CD4-positive, alpha-beta T cell (primary cell): ENCODE measurements at regions of chr16 and their contacts with region 1.

Region 1: DNA sequence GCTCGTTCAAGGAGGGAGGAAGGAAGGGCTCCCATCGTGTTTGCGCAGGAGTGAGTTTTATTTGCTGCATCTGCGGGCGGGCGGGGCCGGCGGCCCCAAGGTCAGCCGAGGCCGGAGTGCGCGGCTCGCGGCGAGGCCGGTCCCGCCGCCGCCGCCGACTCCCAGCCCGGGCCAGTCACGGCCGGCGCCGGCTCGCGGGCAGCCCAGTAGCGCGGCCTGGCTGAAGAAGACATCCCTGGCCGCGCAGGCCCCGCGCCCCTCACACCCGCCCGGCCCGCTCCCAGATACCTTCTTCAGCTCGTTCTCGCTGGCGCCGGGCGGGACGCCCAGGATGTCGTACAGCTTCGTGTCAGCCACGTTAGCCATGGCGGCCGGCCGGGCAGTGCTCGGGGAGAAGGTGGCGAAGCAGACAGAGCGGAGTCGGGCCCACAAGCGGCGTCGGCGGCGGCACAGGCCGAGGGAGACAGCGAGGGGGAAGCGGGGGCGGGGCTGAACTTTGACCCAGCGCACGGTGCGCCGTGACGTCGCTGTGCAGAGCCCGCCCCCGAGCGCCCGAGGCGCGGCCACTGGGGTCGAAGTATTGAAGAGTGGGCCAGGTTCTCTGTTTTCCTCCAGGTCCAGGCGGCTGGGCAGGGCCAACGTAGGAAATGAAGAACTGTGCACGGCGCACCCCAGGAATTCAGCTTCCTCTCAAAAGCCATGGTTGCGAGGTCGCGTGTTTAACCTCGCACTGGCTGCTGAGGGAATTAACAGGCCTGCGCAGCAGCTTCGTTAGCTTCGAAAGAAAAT is at the start of gene DNAJA2:
- DNase-seq: peak; percentile 86 to 97 (median 90)
- ATAC-seq: peak; percentile 90
- H3K4me3 ChIP-seq: peak within 1 kb of the TSS; percentile 86
- H3K4me3 Mint-ChIP-seq: peak within 1 kb of the TSS; percentile 93
- H3K27ac ChIP-seq: peak within 1 kb of the TSS; percentile 93 to 94
- H3K27ac Mint-ChIP-seq: peak within 1 kb of the TSS; percentile 91
- H3K4me1 ChIP-seq: peaks cover 48% of the 10 kb centered on the region
- H3K4me1 Mint-ChIP-seq: peaks cover 61% of the 10 kb centered on the region
- H3K27me3 ChIP-seq: no peaks in the 10 kb centered on the region
- H3K27me3 Mint-ChIP-seq: no peaks in the 10 kb centered on the region
- CTCF ChIP-seq: no peak
- total RNA-seq, gene DNAJA2: 80.8 to 81.4 TPM

Region 2: GRCh38 chr16:46789499-46790414 is 183.6 kb before region 1 on chr16:
- CTCF ChIA-PET with region 1: no interaction called
- POLR2A ChIA-PET with region 1: interaction called, 7 read pairs
- intact Hi-C with region 1: loop called in 1 of 2 experiments (anchors 10 kb)
- DNase-seq: peak; percentile 66 to 88 (median 77)
- ATAC-seq: peak; percentile 97
- H3K4me3 ChIP-seq: peak overlapping the region; percentile 68
- H3K4me3 Mint-ChIP-seq: peak overlapping the region; percentile 79
- H3K27ac ChIP-seq: peak overlapping the region in 1 of 2 donors; percentile 48
- H3K27ac Mint-ChIP-seq: peak overlapping the region; percentile 30
- H3K4me1 ChIP-seq: peaks cover 11% of the 10 kb centered on the region
- H3K4me1 Mint-ChIP-seq: peaks cover 19% of the 10 kb centered on the region
- H3K27me3 ChIP-seq: no peaks in the 10 kb centered on the region
- H3K27me3 Mint-ChIP-seq: no peaks in the 10 kb centered on the region
- CTCF ChIP-seq: no peak

Region 3: GRCh38 chr16:46883690-46884512 is 89.5 kb before region 1 on chr16 and contains the start of gene GPT2:
- CTCF ChIA-PET with region 1: no interaction called
- POLR2A ChIA-PET with region 1: interaction called, 22 read pairs
- intact Hi-C with region 1: no loop called
- DNase-seq: peak; percentile 35 to 81 (median 55)
- ATAC-seq: peak; percentile 91
- H3K4me3 ChIP-seq: peak within 1 kb of the TSS; percentile 58
- H3K4me3 Mint-ChIP-seq: peak within 1 kb of the TSS; percentile 88
- H3K27ac ChIP-seq: no peak within 1 kb of the TSS
- H3K27ac Mint-ChIP-seq: no peak within 1 kb of the TSS
- H3K4me1 ChIP-seq: peaks cover 12% of the 10 kb centered on the region
- H3K4me1 Mint-ChIP-seq: peaks cover 17% of the 10 kb centered on the region
- H3K27me3 ChIP-seq: peaks cover 0 to 6% of the 10 kb centered on the region in 2 experiments
- H3K27me3 Mint-ChIP-seq: peaks cover 13% of the 10 kb centered on the region
- CTCF ChIP-seq: no peak
- total RNA-seq, gene GPT2: 0.47 TPM in 1 of 2 experiments, not detected in the other

Region 4: DNA sequence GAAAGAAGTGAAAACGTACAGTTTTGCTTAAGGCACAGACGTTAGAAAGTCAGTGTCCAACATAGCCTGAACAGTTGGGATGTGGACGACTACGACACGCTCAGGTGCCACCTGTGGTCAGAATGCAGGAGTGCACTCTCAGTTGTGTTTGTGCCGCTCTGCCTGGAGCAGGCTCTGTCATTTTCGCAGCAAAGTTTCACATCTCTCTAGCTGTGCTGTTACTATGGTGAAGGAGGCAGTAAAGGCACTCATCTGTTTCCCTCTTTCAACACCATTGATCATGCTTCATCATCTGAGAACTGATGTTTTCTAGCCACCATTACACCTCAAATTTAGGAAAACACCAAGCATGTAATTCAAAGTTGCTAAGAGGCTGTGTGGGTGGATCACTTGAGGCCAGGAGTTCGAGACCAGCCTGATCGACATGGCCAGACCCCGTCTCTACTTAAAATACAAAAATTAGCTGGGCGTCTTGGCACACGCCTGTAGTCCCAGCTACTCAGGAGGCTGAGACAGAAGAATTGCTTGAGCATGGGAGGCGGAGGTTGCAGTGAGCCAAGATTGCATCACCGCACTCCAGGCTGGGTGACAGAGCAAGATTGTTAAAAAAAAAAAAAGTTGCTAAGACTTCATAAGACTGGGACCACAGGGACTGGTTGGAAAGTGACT is 45.0 kb after region 1 on chr16:
- CTCF ChIA-PET with region 1: no interaction called
- POLR2A ChIA-PET with region 1: interaction called, 3 read pairs
- intact Hi-C with region 1: loop called in 1 of 2 experiments (anchors 5 kb)
- DNase-seq: peak in 12 of 14 experiments; percentile 10 to 73 (median 24)
- ATAC-seq: peak; percentile 85
- H3K4me3 ChIP-seq: no peak overlapping the region
- H3K4me3 Mint-ChIP-seq: no peak overlapping the region
- H3K27ac ChIP-seq: no peak overlapping the region
- H3K27ac Mint-ChIP-seq: no peak overlapping the region
- H3K4me1 ChIP-seq: peaks cover 18% of the 10 kb centered on the region
- H3K4me1 Mint-ChIP-seq: peaks cover 18% of the 10 kb centered on the region
- H3K27me3 ChIP-seq: no peaks in the 10 kb centered on the region
- H3K27me3 Mint-ChIP-seq: no peaks in the 10 kb centered on the region
- CTCF ChIP-seq: no peak

Region 5: GRCh38 chr16:47141773-47142485 is 168.5 kb after region 1 on chr16:
- CTCF ChIA-PET with region 1: interaction called, 7 read pairs
- POLR2A ChIA-PET with region 1: interaction called, 23 read pairs
- intact Hi-C with region 1: loop called (anchors 2 to 10 kb)
- DNase-seq: peak; percentile 63 to 91 (median 77)
- ATAC-seq: peak; percentile 82
- H3K4me3 ChIP-seq: peak overlapping the region; percentile 56
- H3K4me3 Mint-ChIP-seq: peak overlapping the region; percentile 87
- H3K27ac ChIP-seq: no peak overlapping the region
- H3K27ac Mint-ChIP-seq: peak overlapping the region; percentile 45
- H3K4me1 ChIP-seq: peaks cover 17% of the 10 kb centered on the region
- H3K4me1 Mint-ChIP-seq: peaks cover 17% of the 10 kb centered on the region
- H3K27me3 ChIP-seq: peaks cover 0 to 8% of the 10 kb centered on the region in 2 experiments
- H3K27me3 Mint-ChIP-seq: peaks cover 21% of the 10 kb centered on the region
- CTCF ChIP-seq: peak; percentile 83

Region 6: GRCh38 chr16:48244080-48244862 is 1270.9 kb after region 1 on chr16 and contains the start of gene LONP2:
- CTCF ChIA-PET with region 1: no interaction called
- POLR2A ChIA-PET with region 1: interaction called, 6 read pairs
- intact Hi-C with region 1: loop called in 1 of 2 experiments (anchors 5 kb)
- DNase-seq: peak; percentile 81 to 94 (median 87)
- ATAC-seq: peak; percentile 95
- H3K4me3 ChIP-seq: peak within 1 kb of the TSS; percentile 86
- H3K4me3 Mint-ChIP-seq: peak within 1 kb of the TSS; percentile 90
- H3K27ac ChIP-seq: peak within 1 kb of the TSS; percentile 78
- H3K27ac Mint-ChIP-seq: peak within 1 kb of the TSS; percentile 89
- H3K4me1 ChIP-seq: peaks cover 43% of the 10 kb centered on the region
- H3K4me1 Mint-ChIP-seq: peaks cover 49% of the 10 kb centered on the region
- H3K27me3 ChIP-seq: no peaks in the 10 kb centered on the region
- H3K27me3 Mint-ChIP-seq: no peaks in the 10 kb centered on the region
- CTCF ChIP-seq: no peak
- total RNA-seq, gene LONP2: 77.2 to 81.0 TPM

Region 7: GRCh38 chr16:48609652-48610029 is 1636.2 kb after region 1 on chr16:
- CTCF ChIA-PET with region 1: no interaction called
- POLR2A ChIA-PET with region 1: interaction called, 20 read pairs
- intact Hi-C with region 1: no loop called
- DNase-seq: no peak
- ATAC-seq: peak; percentile 13
- H3K4me3 ChIP-seq: peak overlapping the region; percentile 92
- H3K4me3 Mint-ChIP-seq: no peak overlapping the region
- H3K27ac ChIP-seq: peak overlapping the region; percentile 67 to 87
- H3K27ac Mint-ChIP-seq: peak overlapping the region; percentile 95
- H3K4me1 ChIP-seq: peaks cover 84% of the 10 kb centered on the region
- H3K4me1 Mint-ChIP-seq: peaks cover 52% of the 10 kb centered on the region
- H3K27me3 ChIP-seq: no peaks in the 10 kb centered on the region
- H3K27me3 Mint-ChIP-seq: no peaks in the 10 kb centered on the region
- CTCF ChIP-seq: no peak